ENCODE measurements at regions of chr12 and their contacts with region 1.

Region 1: GRCh38 chr12:24902511-24903328 is 46.2 kb downstream of the BCAT1 start:
- DNase-seq: peak; percentile 39
- H3K4me3 Mint-ChIP-seq: peak overlapping the region; percentile 81
- H3K27ac Mint-ChIP-seq: peak overlapping the region; percentile 60
- H3K4me1 Mint-ChIP-seq: peaks cover 32% of the 10 kb centered on the region
- H3K27me3 Mint-ChIP-seq: peaks cover 19% of the 10 kb centered on the region

Region 2: DNA sequence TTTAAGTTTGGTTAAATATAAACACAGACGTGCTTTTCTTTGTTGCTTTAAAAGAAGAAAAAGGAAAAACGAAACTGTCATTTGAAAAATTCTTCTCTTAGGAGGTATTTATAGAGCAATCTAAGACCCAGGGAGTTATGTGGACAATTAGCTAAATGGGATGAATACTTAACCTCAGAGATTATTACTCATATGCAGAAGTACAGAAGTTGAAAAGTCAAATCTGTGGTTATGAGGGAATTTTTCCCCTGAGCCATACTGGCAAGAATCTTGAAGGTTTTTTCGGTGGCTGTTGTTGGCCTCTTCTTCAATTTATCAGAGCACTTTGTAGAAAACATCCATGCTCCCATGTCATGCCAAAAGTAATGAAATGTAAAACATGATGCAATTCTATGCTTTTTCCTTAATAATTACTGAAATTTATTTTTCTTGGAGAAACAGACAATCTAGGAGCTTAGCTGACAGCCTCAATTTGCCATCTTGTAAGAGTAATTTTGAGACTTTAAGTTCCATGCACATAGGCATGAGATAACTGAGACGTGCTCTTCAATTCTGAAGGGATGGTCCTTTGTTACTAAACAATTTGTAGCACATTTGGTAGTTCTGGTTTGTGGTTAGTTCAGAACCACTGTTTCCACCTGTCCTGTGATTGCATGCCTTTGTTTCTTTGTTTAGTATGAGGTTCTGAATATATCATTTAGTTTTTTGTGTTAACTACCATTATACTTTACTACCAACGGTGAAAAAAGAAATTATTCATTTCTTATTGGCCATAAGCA is 80.4 kb before region 1 on chr12:
- CTCF ChIA-PET with region 1: no interaction called
- POLR2A ChIA-PET with region 1: no interaction called
- intact Hi-C with region 1: no loop called
- DNase-seq: no peak
- H3K4me3 Mint-ChIP-seq: no peak overlapping the region
- H3K27ac Mint-ChIP-seq: peak overlapping the region; percentile 50
- H3K4me1 Mint-ChIP-seq: peaks cover 30% of the 10 kb centered on the region
- H3K27me3 Mint-ChIP-seq: no peaks in the 10 kb centered on the region

Region 3: GRCh38 chr12:24852420-24852819 is 50.3 kb before region 1 on chr12:
- CTCF ChIA-PET with region 1: interaction called, 4 read pairs
- POLR2A ChIA-PET with region 1: no interaction called
- intact Hi-C with region 1: loop called (anchors 1 kb)
- DNase-seq: no peak
- H3K4me3 Mint-ChIP-seq: no peak overlapping the region
- H3K27ac Mint-ChIP-seq: no peak overlapping the region
- H3K4me1 Mint-ChIP-seq: peaks cover 16% of the 10 kb centered on the region
- H3K27me3 Mint-ChIP-seq: peaks cover 14% of the 10 kb centered on the region

Region 4: DNA sequence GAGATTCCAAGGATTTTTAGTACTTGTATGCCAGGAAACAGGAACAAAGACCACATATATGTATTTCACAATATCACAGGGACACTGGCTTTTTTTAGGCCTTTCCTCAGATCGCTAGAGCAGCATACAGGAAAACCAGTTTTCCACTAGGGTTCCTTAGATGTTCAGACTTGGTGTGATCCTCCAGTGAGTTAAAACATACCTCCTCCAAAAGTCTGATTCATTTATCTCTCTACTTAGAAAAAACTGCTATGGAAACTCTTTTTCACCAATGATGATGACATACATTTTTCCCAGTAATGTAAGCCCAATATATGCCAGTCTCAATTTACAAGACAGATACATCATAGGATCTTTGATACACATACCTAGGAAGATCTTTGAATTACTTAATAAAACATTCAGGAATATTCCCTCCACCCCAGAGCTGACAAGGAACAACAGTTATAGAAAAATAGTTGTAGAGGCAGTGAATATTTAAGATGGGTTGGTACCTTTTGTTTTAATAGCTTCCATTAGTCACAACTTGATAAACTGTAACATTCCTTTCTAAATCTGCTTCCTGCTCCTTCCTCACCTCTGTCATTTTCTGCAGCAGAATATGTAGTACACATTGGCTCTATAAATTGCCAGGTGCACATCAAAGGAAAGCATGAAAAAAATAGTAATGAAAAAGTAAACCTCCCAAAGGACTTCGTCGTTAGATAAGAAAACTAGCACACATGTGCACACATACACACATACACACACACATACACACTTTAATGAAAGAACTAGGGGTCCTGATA is 18.7 kb after region 1 on chr12:
- CTCF ChIA-PET with region 1: interaction called, 4 read pairs
- POLR2A ChIA-PET with region 1: interaction called, 5 read pairs
- intact Hi-C with region 1: loop called (anchors 1 kb)
- DNase-seq: no peak
- H3K4me3 Mint-ChIP-seq: no peak overlapping the region
- H3K27ac Mint-ChIP-seq: no peak overlapping the region
- H3K4me1 Mint-ChIP-seq: peaks cover 33% of the 10 kb centered on the region
- H3K27me3 Mint-ChIP-seq: peaks cover 7% of the 10 kb centered on the region

Region 5: GRCh38 chr12:24947541-24948419 is 45.1 kb after region 1 on chr12:
- CTCF ChIA-PET with region 1: no interaction called
- POLR2A ChIA-PET with region 1: interaction called, 4 read pairs
- intact Hi-C with region 1: loop called (anchors 1 kb)
- DNase-seq: no peak
- H3K4me3 Mint-ChIP-seq: peak overlapping the region; percentile 78
- H3K27ac Mint-ChIP-seq: peak overlapping the region; percentile 53
- H3K4me1 Mint-ChIP-seq: peaks cover 34% of the 10 kb centered on the region
- H3K27me3 Mint-ChIP-seq: peaks cover 55% of the 10 kb centered on the region

Region 6: GRCh38 chr12:24960222-24960855 is 57.6 kb after region 1 on chr12:
- CTCF ChIA-PET with region 1: no interaction called
- POLR2A ChIA-PET with region 1: no interaction called
- intact Hi-C with region 1: loop called (anchors 2 kb)
- DNase-seq: peak; percentile 71
- H3K4me3 Mint-ChIP-seq: no peak overlapping the region
- H3K27ac Mint-ChIP-seq: no peak overlapping the region
- H3K4me1 Mint-ChIP-seq: peaks cover 14% of the 10 kb centered on the region
- H3K27me3 Mint-ChIP-seq: peaks cover 10% of the 10 kb centered on the region

Measured in activated CD4-positive, alpha-beta memory T cell treated with anti-CD3 and anti-CD28 coated beads for 36 hours (primary cell).